ENCODE measurements at regions of chr17 and their contacts with region 1.

Region 1: DNA sequence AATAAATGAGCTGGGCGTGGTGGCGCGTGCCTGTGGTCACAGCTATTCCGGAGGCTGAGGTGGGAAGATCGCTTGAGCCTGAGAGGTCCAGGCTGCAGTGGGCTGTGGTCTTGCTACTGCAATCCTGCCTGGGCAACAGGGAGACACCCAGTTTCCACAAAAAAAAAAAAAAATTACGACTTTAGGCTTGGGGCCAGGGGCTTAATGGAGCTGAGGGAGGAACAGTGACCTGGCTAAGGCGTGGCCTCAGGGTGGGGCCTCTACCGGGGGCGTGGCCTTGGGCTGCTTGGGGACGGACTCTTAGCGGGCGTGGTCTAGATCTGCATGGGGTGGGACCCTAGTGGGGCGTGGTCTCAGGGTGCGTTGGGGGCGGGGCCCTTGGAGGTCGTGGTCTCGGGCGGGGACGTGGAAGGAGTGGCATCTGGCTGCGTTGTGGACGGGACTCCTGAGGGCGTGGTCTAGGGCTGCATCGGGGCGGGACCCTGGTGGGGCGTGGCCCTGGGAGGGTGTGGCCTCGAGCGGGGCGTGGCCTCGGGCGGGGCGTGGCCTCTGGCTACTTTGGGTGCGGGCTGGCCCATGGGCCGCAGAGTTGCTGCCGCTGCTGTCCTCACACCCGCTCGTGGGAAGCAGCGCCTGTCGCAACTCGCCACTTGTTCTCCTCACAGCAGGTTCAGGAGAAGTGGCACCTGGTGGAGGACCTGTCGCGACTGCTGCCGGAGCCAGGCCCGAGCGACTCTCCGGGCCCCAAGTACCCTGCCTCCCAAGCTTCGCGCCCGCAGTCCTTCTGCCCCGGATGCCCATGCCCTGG is 5.8 kb upstream of the C17orf99 start:
- DNase-seq: peak; percentile 88 to 98 (median 96)
- ATAC-seq: peak; percentile 95
- H3K4me3 ChIP-seq: no peak overlapping the region
- H3K4me3 Mint-ChIP-seq: peak overlapping the region; percentile 40 to 75 (median 64)
- H3K27ac ChIP-seq: peak overlapping the region; percentile 45
- H3K27ac Mint-ChIP-seq: peak overlapping the region; percentile 68 to 96 (median 87)
- H3K4me1 ChIP-seq: peaks cover 27 to 71% of the 10 kb centered on the region in 2 donors
- H3K4me1 Mint-ChIP-seq: peaks cover 57 to 80% (median 75%) of the 10 kb centered on the region in 7 donors
- H3K27me3 ChIP-seq: no peaks in the 10 kb centered on the region
- H3K27me3 Mint-ChIP-seq: no peaks in the 10 kb centered on the region

Region 2: GRCh38 chr17:77501101-77501566 is 639.2 kb before region 1 on chr17:
- CTCF ChIA-PET with region 1: no interaction called
- POLR2A ChIA-PET with region 1: no interaction called
- intact Hi-C with region 1: no loop called
- DNase-seq: peak in 4 of 9 donors; percentile 34 to 49 (median 42)
- ATAC-seq: no peak
- H3K4me3 ChIP-seq: no peak overlapping the region
- H3K4me3 Mint-ChIP-seq: peak overlapping the region in 1 of 10 donors; percentile 14
- H3K27ac ChIP-seq: no peak overlapping the region
- H3K27ac Mint-ChIP-seq: peak overlapping the region in 6 of 9 donors; percentile 17 to 65 (median 46)
- H3K4me1 ChIP-seq: no peaks in the 10 kb centered on the region
- H3K4me1 Mint-ChIP-seq: peaks cover 0 to 16% (median 0%) of the 10 kb centered on the region in 7 donors
- H3K27me3 ChIP-seq: no peaks in the 10 kb centered on the region
- H3K27me3 Mint-ChIP-seq: no peaks in the 10 kb centered on the region

Region 3: DNA sequence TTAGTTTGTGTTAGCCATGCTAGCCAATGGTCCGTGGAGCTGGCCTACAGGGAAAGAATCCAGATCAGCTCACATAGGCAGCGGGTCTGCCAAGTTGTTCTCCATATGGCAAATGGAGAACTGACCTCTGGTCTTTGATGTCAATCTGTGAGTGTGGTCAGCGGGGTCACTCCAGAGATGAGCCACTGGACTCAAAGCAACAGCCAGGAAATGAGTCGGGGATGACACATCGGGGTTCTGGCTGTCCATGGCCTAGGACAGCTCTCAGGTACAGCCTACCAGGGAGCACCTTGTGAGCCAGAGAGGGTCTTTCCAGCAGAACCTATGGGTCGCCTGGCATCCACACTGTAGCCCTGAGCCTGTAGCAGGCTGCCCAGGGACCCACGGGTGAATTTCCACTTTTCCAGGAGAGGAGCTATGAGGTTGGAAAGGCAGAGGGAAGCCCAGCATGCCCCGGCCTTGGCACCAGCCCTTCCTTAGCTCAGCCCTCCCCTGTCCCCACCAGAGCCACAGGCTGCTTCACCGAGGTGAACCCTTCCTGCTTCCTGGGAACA is 384.9 kb before region 1 on chr17:
- CTCF ChIA-PET with region 1: no interaction called
- POLR2A ChIA-PET with region 1: no interaction called
- intact Hi-C with region 1: no loop called
- DNase-seq: no peak
- ATAC-seq: no peak
- H3K4me3 ChIP-seq: no peak overlapping the region
- H3K4me3 Mint-ChIP-seq: no peak overlapping the region
- H3K27ac ChIP-seq: no peak overlapping the region
- H3K27ac Mint-ChIP-seq: no peak overlapping the region
- H3K4me1 ChIP-seq: no peaks in the 10 kb centered on the region
- H3K4me1 Mint-ChIP-seq: no peaks in the 10 kb centered on the region
- H3K27me3 ChIP-seq: no peaks in the 10 kb centered on the region
- H3K27me3 Mint-ChIP-seq: peaks cover 0 to 2% (median 0%) of the 10 kb centered on the region in 5 donors

Region 4: GRCh38 chr17:78082988-78083387 is 57.4 kb before region 1 on chr17:
- CTCF ChIA-PET with region 1: interaction called, 3 read pairs
- POLR2A ChIA-PET with region 1: interaction called, 3 read pairs
- intact Hi-C with region 1: loop called in 1 of 2 experiments (anchors 2 kb)
- DNase-seq: no peak
- ATAC-seq: no peak
- H3K4me3 ChIP-seq: no peak overlapping the region
- H3K4me3 Mint-ChIP-seq: no peak overlapping the region
- H3K27ac ChIP-seq: no peak overlapping the region
- H3K27ac Mint-ChIP-seq: no peak overlapping the region
- H3K4me1 ChIP-seq: no peaks in the 10 kb centered on the region
- H3K4me1 Mint-ChIP-seq: peaks cover 0 to 12% (median 0%) of the 10 kb centered on the region in 7 donors
- H3K27me3 ChIP-seq: no peaks in the 10 kb centered on the region
- H3K27me3 Mint-ChIP-seq: no peaks in the 10 kb centered on the region

Region 5: GRCh38 chr17:78112518-78113226 is 27.7 kb before region 1 on chr17:
- CTCF ChIA-PET with region 1: interaction called, 59 read pairs
- POLR2A ChIA-PET with region 1: interaction called, 898 read pairs
- intact Hi-C with region 1: no loop called
- DNase-seq: peak; percentile 57 to 89 (median 73)
- ATAC-seq: peak; percentile 85
- H3K4me3 ChIP-seq: no peak overlapping the region
- H3K4me3 Mint-ChIP-seq: peak overlapping the region in 7 of 10 donors; percentile 11 to 71 (median 61)
- H3K27ac ChIP-seq: peak overlapping the region; percentile 43
- H3K27ac Mint-ChIP-seq: peak overlapping the region; percentile 65 to 95 (median 84)
- H3K4me1 ChIP-seq: peaks cover 21 to 36% of the 10 kb centered on the region in 2 donors
- H3K4me1 Mint-ChIP-seq: peaks cover 35 to 64% (median 47%) of the 10 kb centered on the region in 7 donors
- H3K27me3 ChIP-seq: no peaks in the 10 kb centered on the region
- H3K27me3 Mint-ChIP-seq: no peaks in the 10 kb centered on the region

Region 6: GRCh38 chr17:78128551-78129350 is 11.6 kb before region 1 on chr17 and contains the start of gene TMC6:
- CTCF ChIA-PET with region 1: interaction called, 52 read pairs
- POLR2A ChIA-PET with region 1: interaction called, 898 read pairs
- intact Hi-C with region 1: loop called (anchors 1 kb)
- DNase-seq: peak in 8 of 9 donors; percentile 76 to 88 (median 82)
- ATAC-seq: peak; percentile 45
- H3K4me3 ChIP-seq: peak within 1 kb of the TSS; percentile 95
- H3K4me3 Mint-ChIP-seq: peak within 1 kb of the TSS; percentile 89 to 100 (median 99)
- H3K27ac ChIP-seq: peak within 1 kb of the TSS; percentile 77
- H3K27ac Mint-ChIP-seq: peak within 1 kb of the TSS; percentile 95 to 99 (median 97)
- H3K4me1 ChIP-seq: peaks cover 56 to 59% of the 10 kb centered on the region in 2 donors
- H3K4me1 Mint-ChIP-seq: peaks cover 19 to 53% (median 39%) of the 10 kb centered on the region in 7 donors
- H3K27me3 ChIP-seq: no peaks in the 10 kb centered on the region
- H3K27me3 Mint-ChIP-seq: peaks cover 0 to 3% (median 0%) of the 10 kb centered on the region in 5 donors
- total RNA-seq, gene TMC6: 574 to 808 (median 773) TPM

Region 7: GRCh38 chr17:78168242-78168902 is 28.0 kb after region 1 on chr17 and contains the start of gene SYNGR2:
- CTCF ChIA-PET with region 1: interaction called, 3 read pairs
- POLR2A ChIA-PET with region 1: interaction called, 13 read pairs
- intact Hi-C with region 1: loop called (anchors 1 kb)
- DNase-seq: peak; percentile 80 to 94 (median 87)
- ATAC-seq: peak; percentile 91
- H3K4me3 ChIP-seq: peak within 1 kb of the TSS; percentile 58
- H3K4me3 Mint-ChIP-seq: peak within 1 kb of the TSS; percentile 64 to 83 (median 73)
- H3K27ac ChIP-seq: peak within 1 kb of the TSS; percentile 89
- H3K27ac Mint-ChIP-seq: peak within 1 kb of the TSS; percentile 31 to 88 (median 66)
- H3K4me1 ChIP-seq: peaks cover 6 to 25% of the 10 kb centered on the region in 2 donors
- H3K4me1 Mint-ChIP-seq: peaks cover 22 to 40% (median 35%) of the 10 kb centered on the region in 7 donors
- H3K27me3 ChIP-seq: no peaks in the 10 kb centered on the region
- H3K27me3 Mint-ChIP-seq: no peaks in the 10 kb centered on the region
- total RNA-seq, gene SYNGR2: 47.6 to 109 (median 58.6) TPM

Region 8: GRCh38 chr17:78186692-78187595 is 46.6 kb after region 1 on chr17 and contains the starts of genes AFMID and TK1:
- CTCF ChIA-PET with region 1: interaction called, 6 read pairs
- POLR2A ChIA-PET with region 1: interaction called, 3 read pairs
- intact Hi-C with region 1: loop called in 1 of 2 experiments (anchors 1 kb)
- DNase-seq: peak; percentile 33 to 96 (median 56)
- ATAC-seq: peak; percentile 95
- H3K4me3 ChIP-seq: peak within 1 kb of the TSS; percentile 62
- H3K4me3 Mint-ChIP-seq: peak within 1 kb of the TSS; percentile 75 to 91 (median 85)
- H3K27ac ChIP-seq: no peak within 1 kb of the TSS
- H3K27ac Mint-ChIP-seq: peak within 1 kb of the TSS in 8 of 9 donors; percentile 14 to 81 (median 63)
- H3K4me1 ChIP-seq: peaks cover 0 to 5% of the 10 kb centered on the region in 2 donors
- H3K4me1 Mint-ChIP-seq: peaks cover 0 to 39% (median 13%) of the 10 kb centered on the region in 7 donors
- H3K27me3 ChIP-seq: no peaks in the 10 kb centered on the region
- H3K27me3 Mint-ChIP-seq: no peaks in the 10 kb centered on the region
- total RNA-seq, gene AFMID: 1.2 to 19.2 (median 3.0) TPM
- total RNA-seq, gene TK1: 0.29 to 57.7 (median 1.0) TPM in 3 of 5 experiments, not detected in the others

Region 9: DNA sequence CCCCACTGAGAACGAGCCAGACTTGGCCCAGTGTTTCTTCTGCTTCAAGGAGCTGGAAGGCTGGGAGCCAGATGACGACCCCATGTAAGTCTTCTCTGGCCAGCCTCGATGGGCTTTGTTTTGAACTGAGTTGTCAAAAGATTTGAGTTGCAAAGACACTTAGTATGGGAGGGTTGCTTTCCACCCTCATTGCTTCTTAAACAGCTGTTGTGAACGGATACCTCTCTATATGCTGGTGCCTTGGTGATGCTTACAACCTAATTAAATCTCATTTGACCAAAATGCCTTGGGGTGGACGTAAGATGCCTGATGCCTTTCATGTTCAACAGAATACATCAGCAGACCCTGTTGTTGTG is 74.3 kb after region 1 on chr17:
- CTCF ChIA-PET with region 1: no interaction called
- POLR2A ChIA-PET with region 1: no interaction called
- intact Hi-C with region 1: loop called (anchors 1 to 10 kb)
- DNase-seq: no peak
- ATAC-seq: no peak
- H3K4me3 ChIP-seq: no peak overlapping the region
- H3K4me3 Mint-ChIP-seq: peak overlapping the region in 9 of 10 donors; percentile 44 to 97 (median 68)
- H3K27ac ChIP-seq: no peak overlapping the region
- H3K27ac Mint-ChIP-seq: peak overlapping the region in 1 of 9 donors; percentile 87
- H3K4me1 ChIP-seq: peaks cover 5 to 6% of the 10 kb centered on the region in 2 donors
- H3K4me1 Mint-ChIP-seq: peaks cover 0 to 25% (median 4%) of the 10 kb centered on the region in 7 donors
- H3K27me3 ChIP-seq: no peaks in the 10 kb centered on the region
- H3K27me3 Mint-ChIP-seq: no peaks in the 10 kb centered on the region